IMR-90 (cell line): ENCODE measurements at regions of chr19 and their contacts with region 1.

Region 1: GRCh38 chr19:11293433-11294389 is 2.2 kb upstream of the TSPAN16 start:
- DNase-seq: peak; percentile 87
- ATAC-seq: peak; percentile 100
- H3K4me3 ChIP-seq: peak overlapping the region; percentile 16; the same call in 1 of the 2 replicates
- H3K27ac ChIP-seq: peak overlapping the region; percentile 34
- H3K4me1 ChIP-seq: 0 out of 2 replicates have a peak, but pooled peaks cover 1% of the 10 kb centered on the region
- H3K27me3 ChIP-seq: peaks cover 4% of the 10 kb centered on the region; the same call in 1 of the 2 replicates
- CTCF ChIP-seq: peak; percentile 97
- POLR2A ChIP-seq: no peak
- RAD21 ChIP-seq: peak; percentile 92

Region 2: GRCh38 chr19:10780368-10780767 is 513.3 kb before region 1 on chr19:
- CTCF ChIA-PET with region 1: no interaction called
- POLR2A ChIA-PET with region 1: no interaction called
- dilution Hi-C with region 1: no loop called
- in situ Hi-C with region 1: no loop called
- intact Hi-C with region 1: no loop called
- DNase-seq: peak; percentile 54
- ATAC-seq: no peak
- H3K4me3 ChIP-seq: no peak overlapping the region
- H3K27ac ChIP-seq: no peak overlapping the region
- H3K4me1 ChIP-seq: no peaks in the 10 kb centered on the region
- H3K27me3 ChIP-seq: no peaks in the 10 kb centered on the region
- CTCF ChIP-seq: no peak
- POLR2A ChIP-seq: no peak
- RAD21 ChIP-seq: no peak

Region 3: DNA sequence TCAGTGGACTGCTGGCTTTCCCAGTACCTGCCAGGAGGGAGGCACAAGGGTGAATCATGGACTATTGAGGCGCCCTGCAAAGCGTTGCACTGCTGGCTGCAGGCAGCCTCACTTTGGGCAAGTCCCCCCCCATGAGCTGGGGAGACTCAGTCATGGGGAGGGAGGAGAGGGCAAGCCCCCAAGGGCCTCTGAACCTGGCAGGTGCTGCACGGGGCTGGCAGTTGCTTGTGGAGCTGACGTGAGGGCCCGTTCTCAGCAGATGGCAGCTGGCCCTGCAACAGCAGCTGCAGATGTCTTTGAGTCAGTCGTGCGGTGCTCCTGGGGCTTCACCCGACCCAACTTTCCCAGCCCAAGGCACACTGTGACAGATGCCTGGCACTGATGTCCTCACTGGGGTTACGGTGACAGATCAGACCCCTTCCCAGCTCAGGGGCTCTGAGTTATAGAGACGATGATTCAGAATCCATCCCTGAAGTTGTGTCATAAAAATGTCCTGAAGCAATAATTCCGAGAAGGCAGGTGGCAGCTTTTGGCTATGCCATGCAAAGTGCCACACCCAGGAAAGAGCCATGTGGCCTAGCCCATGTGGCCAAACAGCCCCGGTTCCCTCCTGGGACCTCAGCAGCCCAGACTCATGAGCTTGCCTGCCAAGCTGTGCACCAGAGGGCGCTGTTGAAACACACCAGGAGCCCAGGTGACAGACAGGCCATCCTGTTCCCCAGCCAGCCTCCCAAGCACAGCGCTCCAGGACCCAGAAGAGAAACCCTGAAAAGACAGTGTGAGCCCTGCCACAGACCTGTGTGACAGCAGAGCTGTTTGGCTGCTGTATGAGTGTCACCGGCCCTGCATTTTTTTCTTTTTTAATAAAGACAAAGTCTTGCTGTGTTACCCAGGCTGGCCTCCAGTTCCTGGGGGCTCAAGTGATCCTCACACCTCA is 258.0 kb before region 1 on chr19:
- CTCF ChIA-PET with region 1: no interaction called
- POLR2A ChIA-PET with region 1: no interaction called
- dilution Hi-C with region 1: no loop called
- in situ Hi-C with region 1: no loop called
- intact Hi-C with region 1: no loop called
- DNase-seq: peak; percentile 74
- ATAC-seq: peak; percentile 97
- H3K4me3 ChIP-seq: no peak overlapping the region
- H3K27ac ChIP-seq: no peak overlapping the region
- H3K4me1 ChIP-seq: no peaks in the 10 kb centered on the region
- H3K27me3 ChIP-seq: no peaks in the 10 kb centered on the region
- CTCF ChIP-seq: peak; percentile 77
- POLR2A ChIP-seq: no peak
- RAD21 ChIP-seq: peak; percentile 80

Region 4: GRCh38 chr19:11339254-11340098 is 45.8 kb after region 1 on chr19 and contains the start of gene RAB3D:
- CTCF ChIA-PET with region 1: interaction called, 4 read pairs
- POLR2A ChIA-PET with region 1: no interaction called
- dilution Hi-C with region 1: no loop called
- in situ Hi-C with region 1: no loop called
- intact Hi-C with region 1: loop called (anchors 1 kb)
- DNase-seq: peak; percentile 77
- ATAC-seq: peak; percentile 99
- H3K4me3 ChIP-seq: peak within 1 kb of the TSS; percentile 85
- H3K27ac ChIP-seq: peak within 1 kb of the TSS; percentile 60
- H3K4me1 ChIP-seq: peaks cover 8% of the 10 kb centered on the region
- H3K27me3 ChIP-seq: no peaks in the 10 kb centered on the region
- CTCF ChIP-seq: no peak
- POLR2A ChIP-seq: no peak
- RAD21 ChIP-seq: 0 out of 2 replicates have a peak, but pooled peaks have one; percentile 6
- total RNA-seq, gene RAB3D: 4.8 and 5.0 TPM in 2 replicates

Region 5: DNA sequence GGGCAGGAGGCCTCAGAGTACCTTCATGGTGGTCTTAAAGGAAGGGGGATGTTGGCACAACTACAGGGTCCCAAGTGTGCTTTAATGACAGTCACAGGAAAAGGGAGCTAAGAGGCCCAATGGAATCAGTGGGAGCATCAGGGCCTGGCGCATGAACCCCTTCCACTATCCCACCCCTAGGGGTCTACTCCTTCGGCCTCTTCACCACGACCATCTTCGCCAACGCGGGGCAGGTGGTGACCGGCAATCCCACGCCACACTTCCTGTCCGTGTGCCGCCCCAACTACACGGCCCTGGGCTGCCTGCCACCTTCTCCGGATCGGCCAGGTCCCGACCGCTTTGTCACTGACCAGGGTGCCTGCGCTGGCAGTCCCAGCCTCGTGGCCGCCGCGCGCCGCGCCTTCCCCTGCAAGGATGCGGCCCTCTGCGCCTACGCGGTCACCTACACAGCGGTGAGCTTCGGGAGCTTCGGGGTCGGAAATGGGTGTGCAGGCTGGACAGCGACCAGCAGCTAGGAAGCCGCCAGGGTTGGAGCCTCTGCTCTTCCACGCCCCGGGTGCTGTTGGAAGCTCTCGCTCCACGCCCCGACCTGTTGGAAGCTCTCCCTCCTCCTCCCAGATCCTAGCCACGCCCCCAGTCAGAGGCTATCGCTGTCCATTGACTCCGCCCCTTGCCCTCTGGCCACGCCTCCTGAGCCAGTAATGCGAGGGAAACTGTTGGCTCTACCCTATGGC is 67.5 kb after region 1 on chr19:
- CTCF ChIA-PET with region 1: no interaction called
- POLR2A ChIA-PET with region 1: no interaction called
- dilution Hi-C with region 1: no loop called
- in situ Hi-C with region 1: no loop called
- intact Hi-C with region 1: no loop called
- DNase-seq: no peak
- ATAC-seq: peak; percentile 48; the same call in 1 of the 2 replicates
- H3K4me3 ChIP-seq: no peak overlapping the region
- H3K27ac ChIP-seq: no peak overlapping the region
- H3K4me1 ChIP-seq: peaks cover 3% of the 10 kb centered on the region
- H3K27me3 ChIP-seq: no peaks in the 10 kb centered on the region
- CTCF ChIP-seq: no peak
- POLR2A ChIP-seq: no peak
- RAD21 ChIP-seq: no peak

Region 6: GRCh38 chr19:11374433-11375142 is 80.9 kb after region 1 on chr19 and contains the start of gene SWSAP1:
- CTCF ChIA-PET with region 1: interaction called, 5 read pairs
- POLR2A ChIA-PET with region 1: no interaction called
- dilution Hi-C with region 1: no loop called
- in situ Hi-C with region 1: no loop called
- intact Hi-C with region 1: loop called (anchors 2 kb)
- DNase-seq: peak; percentile 99
- ATAC-seq: peak; percentile 94
- H3K4me3 ChIP-seq: peak within 1 kb of the TSS; percentile 58
- H3K27ac ChIP-seq: peak within 1 kb of the TSS; percentile 90
- H3K4me1 ChIP-seq: peaks cover 22% of the 10 kb centered on the region
- H3K27me3 ChIP-seq: no peaks in the 10 kb centered on the region
- CTCF ChIP-seq: no peak
- POLR2A ChIP-seq: peak; percentile 75
- RAD21 ChIP-seq: no peak
- total RNA-seq, gene SWSAP1: 0.36 and 0.56 TPM in 2 replicates

Region 7: DNA sequence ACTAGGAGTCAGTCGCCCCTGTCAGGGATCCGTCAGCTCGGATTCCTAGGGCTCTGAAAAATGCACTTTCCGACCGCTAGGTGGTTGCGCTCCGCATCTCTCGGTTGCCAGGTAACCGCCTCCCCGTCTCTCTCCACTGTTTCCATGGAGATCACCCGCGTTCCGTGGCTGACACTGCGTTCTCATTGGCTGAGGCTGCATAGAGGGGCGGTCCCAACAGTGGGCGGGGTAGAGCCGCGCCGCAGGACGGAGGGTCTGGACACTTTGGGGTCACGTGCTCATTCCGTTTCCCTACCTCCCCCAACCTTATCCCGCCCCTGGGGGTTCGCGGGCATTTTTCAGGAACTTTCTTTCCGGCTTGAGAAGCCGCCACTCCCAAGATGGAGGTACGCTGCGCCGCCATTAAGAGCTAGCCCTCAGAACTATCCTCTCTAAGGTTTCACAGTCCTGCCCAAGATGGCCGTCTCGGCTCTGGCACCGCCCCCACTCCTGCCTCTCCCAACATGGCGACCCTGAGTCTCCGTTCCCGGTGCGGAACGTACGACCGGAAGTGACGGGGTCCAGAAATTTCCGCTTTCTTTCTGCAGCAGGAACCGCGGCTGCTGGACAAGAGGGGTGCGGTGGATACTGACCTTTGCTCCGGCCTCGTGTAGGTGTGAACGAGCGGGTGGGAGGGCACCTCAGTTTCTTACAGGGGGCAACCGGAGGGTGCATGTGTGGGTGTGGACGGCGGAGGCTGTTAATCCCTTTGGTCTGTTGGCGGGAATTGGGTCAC is 141.5 kb after region 1 on chr19 and contains the starts of genes ODAD3 and PRKCSH:
- CTCF ChIA-PET with region 1: interaction called, 7 read pairs
- POLR2A ChIA-PET with region 1: no interaction called
- dilution Hi-C with region 1: no loop called
- in situ Hi-C with region 1: no loop called
- intact Hi-C with region 1: loop called (anchors 1 kb)
- DNase-seq: peak; percentile 100
- ATAC-seq: peak; percentile 97
- H3K4me3 ChIP-seq: peak within 1 kb of the TSS; percentile 72
- H3K27ac ChIP-seq: peak within 1 kb of the TSS; percentile 69
- H3K4me1 ChIP-seq: peaks cover 9% of the 10 kb centered on the region
- H3K27me3 ChIP-seq: no peaks in the 10 kb centered on the region
- CTCF ChIP-seq: peak; percentile 90
- POLR2A ChIP-seq: no peak
- RAD21 ChIP-seq: peak; percentile 28
- total RNA-seq, gene ODAD3: under 0.01 and 0.28 TPM in 2 replicates
- total RNA-seq, gene PRKCSH: 36.0 and 55.8 TPM in 2 replicates

Region 8: DNA sequence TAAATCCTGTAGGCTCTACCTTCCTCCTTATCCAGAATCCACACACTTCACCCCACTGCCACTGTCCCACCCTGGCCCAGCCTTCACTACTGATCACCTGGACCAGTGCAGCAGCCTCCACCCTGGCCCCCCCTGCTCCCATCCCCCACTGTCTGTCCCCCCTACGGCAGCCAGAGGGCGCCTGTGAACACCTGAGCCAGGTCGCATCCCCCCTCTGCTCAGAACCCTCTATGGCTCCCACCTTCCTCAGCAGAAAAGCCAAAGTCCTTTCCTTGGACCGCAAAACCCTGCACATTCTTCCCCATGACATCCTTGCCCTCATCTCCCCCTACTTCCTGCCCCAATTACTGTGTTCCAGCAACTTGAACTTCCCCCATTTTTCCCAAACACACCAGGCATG is 166.5 kb after region 1 on chr19:
- CTCF ChIA-PET with region 1: no interaction called
- POLR2A ChIA-PET with region 1: no interaction called
- dilution Hi-C with region 1: no loop called
- in situ Hi-C with region 1: no loop called
- intact Hi-C with region 1: no loop called
- DNase-seq: no peak
- ATAC-seq: no peak
- H3K4me3 ChIP-seq: no peak overlapping the region
- H3K27ac ChIP-seq: no peak overlapping the region
- H3K4me1 ChIP-seq: no peaks in the 10 kb centered on the region
- H3K27me3 ChIP-seq: no peaks in the 10 kb centered on the region; the same call in 1 of the 2 replicates
- CTCF ChIP-seq: peak; percentile 17; the same call in 1 of the 2 replicates
- POLR2A ChIP-seq: no peak
- RAD21 ChIP-seq: no peak

Region 9: DNA sequence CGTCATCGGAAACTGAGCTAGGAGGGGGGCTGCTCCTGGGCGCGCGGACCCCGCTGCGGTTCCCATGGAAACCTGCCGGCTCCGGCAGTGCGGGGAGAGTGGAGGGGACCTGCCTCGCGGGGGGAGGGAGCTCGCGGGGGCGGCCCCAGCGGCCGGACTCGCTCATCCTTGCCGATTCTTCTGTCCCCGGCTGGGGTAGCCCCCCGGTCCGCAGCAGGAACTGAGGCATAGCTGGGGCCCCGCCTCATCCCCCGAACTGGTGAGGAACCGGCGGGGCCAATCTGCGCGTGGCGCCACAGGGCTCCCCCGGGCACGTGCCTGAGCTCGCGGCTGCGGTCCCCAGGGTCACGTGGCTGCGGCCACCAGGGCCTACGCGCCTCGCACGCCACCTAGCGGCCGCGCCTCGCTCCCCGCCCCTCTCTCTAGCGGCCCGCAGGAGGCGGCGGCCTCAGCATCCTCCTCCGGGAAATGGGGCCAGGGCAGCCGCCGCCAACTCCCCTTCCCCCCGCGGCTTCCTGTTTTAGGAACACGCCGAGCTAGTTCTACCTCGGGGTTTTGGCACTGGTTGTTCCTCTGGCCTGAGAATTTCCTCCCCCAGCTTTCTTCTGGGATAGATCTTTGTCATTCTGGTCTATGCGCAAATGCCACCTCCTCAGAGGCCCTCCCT is 188.8 kb after region 1 on chr19:
- CTCF ChIA-PET with region 1: interaction called, 11 read pairs
- POLR2A ChIA-PET with region 1: interaction called, 4 read pairs
- dilution Hi-C with region 1: no loop called
- in situ Hi-C with region 1: loop called (anchors 10 kb)
- intact Hi-C with region 1: loop called (anchors 1 kb)
- DNase-seq: peak; percentile 72
- ATAC-seq: peak; percentile 83
- H3K4me3 ChIP-seq: peak overlapping the region; percentile 49
- H3K27ac ChIP-seq: no peak overlapping the region
- H3K4me1 ChIP-seq: peaks cover 2% of the 10 kb centered on the region; the same call in 1 of the 2 replicates
- H3K27me3 ChIP-seq: peaks cover 42% of the 10 kb centered on the region
- CTCF ChIP-seq: peak; percentile 97
- POLR2A ChIP-seq: no peak
- RAD21 ChIP-seq: peak; percentile 81